ENCODE measurements at regions of chr11 and their contacts with region 1.

Region 1: GRCh38 chr11:74702383-74703007 is 28.7 kb downstream of the CHRDL2 start:
- DNase-seq: peak; percentile 72
- ATAC-seq: peak; percentile 97
- H3K4me3 Mint-ChIP-seq: no peak overlapping the region
- H3K27ac Mint-ChIP-seq: no peak overlapping the region
- H3K4me1 Mint-ChIP-seq: no peaks in the 10 kb centered on the region
- H3K27me3 Mint-ChIP-seq: peaks cover 5% of the 10 kb centered on the region
- CTCF ChIP-seq: peak; percentile 75

Region 2: GRCh38 chr11:74672956-74673692 is 29.4 kb before region 1 on chr11:
- CTCF ChIA-PET with region 1: interaction called, 19 read pairs
- POLR2A ChIA-PET with region 1: no interaction called
- intact Hi-C with region 1: no loop called
- DNase-seq: no peak
- ATAC-seq: no peak
- H3K4me3 Mint-ChIP-seq: no peak overlapping the region
- H3K27ac Mint-ChIP-seq: no peak overlapping the region
- H3K4me1 Mint-ChIP-seq: no peaks in the 10 kb centered on the region
- H3K27me3 Mint-ChIP-seq: no peaks in the 10 kb centered on the region
- CTCF ChIP-seq: no peak

Region 3: GRCh38 chr11:74683279-74683871 is 19.1 kb before region 1 on chr11:
- CTCF ChIA-PET with region 1: interaction called, 54 read pairs
- POLR2A ChIA-PET with region 1: no interaction called
- intact Hi-C with region 1: no loop called
- DNase-seq: peak; percentile 23
- ATAC-seq: peak; percentile 45
- H3K4me3 Mint-ChIP-seq: no peak overlapping the region
- H3K27ac Mint-ChIP-seq: no peak overlapping the region
- H3K4me1 Mint-ChIP-seq: no peaks in the 10 kb centered on the region
- H3K27me3 Mint-ChIP-seq: peaks cover 13% of the 10 kb centered on the region
- CTCF ChIP-seq: peak; percentile 48

Region 4: GRCh38 chr11:74726547-74727182 is 24.2 kb after region 1 on chr11:
- CTCF ChIA-PET with region 1: interaction called, 126 read pairs
- POLR2A ChIA-PET with region 1: interaction called, 4 read pairs
- intact Hi-C with region 1: no loop called
- DNase-seq: peak; percentile 68
- ATAC-seq: peak; percentile 99
- H3K4me3 Mint-ChIP-seq: no peak overlapping the region
- H3K27ac Mint-ChIP-seq: no peak overlapping the region
- H3K4me1 Mint-ChIP-seq: no peaks in the 10 kb centered on the region
- H3K27me3 Mint-ChIP-seq: peaks cover 30% of the 10 kb centered on the region
- CTCF ChIP-seq: peak; percentile 74

Region 5: DNA sequence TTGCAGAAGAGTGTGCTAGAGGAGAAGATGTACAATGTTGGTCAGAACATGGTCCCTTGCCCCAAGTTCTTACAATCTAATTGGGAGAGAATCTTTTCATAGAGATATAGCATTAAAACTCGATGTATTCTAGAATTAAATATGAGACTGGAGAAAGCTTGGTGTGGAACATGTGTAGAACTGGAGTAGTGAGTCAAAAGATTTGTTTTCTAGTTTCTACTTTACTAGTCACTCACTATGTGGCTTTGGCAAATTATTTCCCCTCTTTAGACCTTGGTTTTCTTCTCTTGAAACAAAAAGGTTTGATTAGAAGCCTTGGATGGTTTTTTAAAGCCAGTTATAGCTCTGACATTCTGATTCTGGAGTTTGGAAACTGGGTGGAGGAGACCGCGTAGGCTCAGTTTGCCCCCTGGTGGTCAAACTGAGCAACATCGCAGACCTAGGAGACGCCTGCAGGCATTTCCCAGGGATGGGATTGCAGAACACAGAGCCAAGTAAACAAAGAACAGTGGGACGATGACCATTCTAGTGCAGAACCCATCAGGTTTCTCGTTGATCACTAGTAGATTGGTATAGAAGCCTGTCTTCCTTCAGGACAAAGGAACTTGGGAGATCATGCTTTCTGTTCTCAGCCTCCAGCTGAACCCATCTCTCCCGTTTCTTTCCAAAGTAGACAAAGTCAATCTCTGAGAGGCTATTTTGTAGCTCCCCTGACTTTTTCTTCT is 37.2 kb after region 1 on chr11:
- CTCF ChIA-PET with region 1: interaction called, 64 read pairs
- POLR2A ChIA-PET with region 1: interaction called, 3 read pairs
- intact Hi-C with region 1: no loop called
- DNase-seq: peak; percentile 40
- ATAC-seq: peak; percentile 91
- H3K4me3 Mint-ChIP-seq: no peak overlapping the region
- H3K27ac Mint-ChIP-seq: no peak overlapping the region
- H3K4me1 Mint-ChIP-seq: peaks cover 8% of the 10 kb centered on the region
- H3K27me3 Mint-ChIP-seq: peaks cover 15% of the 10 kb centered on the region
- CTCF ChIP-seq: peak; percentile 78

Region 6: DNA sequence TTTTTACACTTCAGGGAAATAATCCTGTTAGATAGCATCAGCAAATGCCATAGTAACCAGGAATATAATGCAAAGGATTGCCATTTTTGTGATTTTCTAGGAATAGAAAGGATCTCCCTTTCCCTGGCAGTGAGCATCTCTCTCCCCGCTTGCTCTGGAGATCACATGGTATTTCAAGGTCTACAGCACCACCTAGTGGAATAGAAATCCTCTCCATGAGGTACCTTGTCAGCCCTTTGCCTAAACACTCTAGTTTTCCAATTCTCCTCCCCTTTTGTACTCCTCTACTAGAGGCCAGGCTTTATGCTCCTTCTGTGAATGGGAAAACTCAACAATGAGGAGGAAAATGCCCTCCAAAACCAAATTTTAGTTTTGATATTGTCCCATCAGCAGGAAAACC is 168.0 kb after region 1 on chr11:
- CTCF ChIA-PET with region 1: interaction called, 16 read pairs
- POLR2A ChIA-PET with region 1: no interaction called
- intact Hi-C with region 1: no loop called
- DNase-seq: no peak
- ATAC-seq: no peak
- H3K4me3 Mint-ChIP-seq: no peak overlapping the region
- H3K27ac Mint-ChIP-seq: no peak overlapping the region
- H3K4me1 Mint-ChIP-seq: no peaks in the 10 kb centered on the region
- H3K27me3 Mint-ChIP-seq: no peaks in the 10 kb centered on the region
- CTCF ChIP-seq: peak; percentile 45

Region 7: GRCh38 chr11:74895340-74896116 is 193.0 kb after region 1 on chr11:
- CTCF ChIA-PET with region 1: no interaction called
- POLR2A ChIA-PET with region 1: no interaction called
- intact Hi-C with region 1: no loop called
- DNase-seq: no peak
- ATAC-seq: no peak
- H3K4me3 Mint-ChIP-seq: no peak overlapping the region
- H3K27ac Mint-ChIP-seq: no peak overlapping the region
- H3K4me1 Mint-ChIP-seq: no peaks in the 10 kb centered on the region
- H3K27me3 Mint-ChIP-seq: no peaks in the 10 kb centered on the region
- CTCF ChIP-seq: no peak